CD4-positive, alpha-beta memory T cell (primary cell): ENCODE measurements at regions of chr1 and their contacts with region 1.

Region 1: GRCh38 chr1:173714759-173715537 is at the start of gene KLHL20:
- DNase-seq: peak; percentile 89 to 93 (median 91)
- H3K4me3 ChIP-seq: peak within 1 kb of the TSS; percentile 47 to 73
- H3K4me3 Mint-ChIP-seq: peak within 1 kb of the TSS; percentile 95 to 100 (median 97)
- H3K27ac ChIP-seq: peak within 1 kb of the TSS; percentile 78
- H3K27ac Mint-ChIP-seq: peak within 1 kb of the TSS; percentile 92 to 98 (median 97)
- H3K4me1 ChIP-seq: peaks cover 34% of the 10 kb centered on the region
- H3K4me1 Mint-ChIP-seq: peaks cover 18 to 33% (median 25%) of the 10 kb centered on the region in 4 donors
- H3K27me3 ChIP-seq: peaks cover 5% of the 10 kb centered on the region
- H3K27me3 Mint-ChIP-seq: peaks cover 14 to 15% of the 10 kb centered on the region in 2 donors
- total RNA-seq, gene KLHL20: 41.0 to 43.9 TPM

Region 2: GRCh38 chr1:171781176-171781875 is 1933.6 kb before region 1 on chr1 and contains the start of gene METTL13:
- CTCF ChIA-PET with region 1: no interaction called
- POLR2A ChIA-PET with region 1: no interaction called
- intact Hi-C with region 1: loop called (anchors 10 kb)
- DNase-seq: peak; percentile 98 to 100 (median 99)
- H3K4me3 ChIP-seq: peak within 1 kb of the TSS; percentile 92 to 99
- H3K4me3 Mint-ChIP-seq: peak within 1 kb of the TSS; percentile 94 to 100 (median 96)
- H3K27ac ChIP-seq: peak within 1 kb of the TSS; percentile 71
- H3K27ac Mint-ChIP-seq: peak within 1 kb of the TSS; percentile 86 to 99 (median 98)
- H3K4me1 ChIP-seq: peaks cover 53% of the 10 kb centered on the region
- H3K4me1 Mint-ChIP-seq: peaks cover 37 to 67% (median 48%) of the 10 kb centered on the region in 4 donors
- H3K27me3 ChIP-seq: no peaks in the 10 kb centered on the region
- H3K27me3 Mint-ChIP-seq: no peaks in the 10 kb centered on the region
- total RNA-seq, gene METTL13: 33.3 to 36.7 TPM

Region 3: DNA sequence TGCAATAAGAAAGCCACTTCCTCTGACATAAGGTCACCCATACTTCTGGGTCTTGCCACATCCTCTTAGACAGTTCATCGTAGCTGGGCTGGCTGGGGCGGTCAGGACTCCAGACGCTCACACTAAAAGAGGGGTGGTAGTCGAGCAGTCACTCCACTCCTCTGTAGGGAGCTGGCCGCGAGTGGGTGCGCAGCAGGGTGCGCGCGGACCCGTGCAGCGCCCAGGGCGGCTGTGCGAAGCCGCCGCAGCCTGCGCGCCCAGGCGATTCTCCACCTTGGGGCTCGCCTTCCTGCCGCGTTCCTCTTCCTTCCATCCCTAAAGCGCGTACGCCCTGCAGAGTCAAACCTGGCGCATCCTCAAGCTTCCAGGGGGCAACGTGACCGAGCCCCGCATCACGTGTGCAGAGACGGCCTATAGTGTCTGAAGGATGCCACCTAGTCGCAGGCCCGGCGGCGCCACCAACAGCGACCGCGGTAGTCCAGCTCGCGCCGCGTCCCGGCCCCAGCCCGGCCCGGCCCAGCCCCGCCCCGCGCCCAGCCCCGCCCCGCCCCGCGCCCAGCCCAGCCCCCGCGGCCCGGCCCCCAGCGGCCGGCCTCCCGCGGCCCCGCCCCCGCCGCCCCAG is 238.2 kb before region 1 on chr1:
- CTCF ChIA-PET with region 1: interaction called, 8 read pairs
- POLR2A ChIA-PET with region 1: interaction called, 37 read pairs
- intact Hi-C with region 1: loop called (anchors 1 kb)
- DNase-seq: peak; percentile 77 to 90 (median 84)
- H3K4me3 ChIP-seq: peak overlapping the region; percentile 93
- H3K4me3 Mint-ChIP-seq: peak overlapping the region; percentile 89 to 94 (median 91)
- H3K27ac ChIP-seq: peak overlapping the region; percentile 89
- H3K27ac Mint-ChIP-seq: peak overlapping the region; percentile 89 to 95 (median 91)
- H3K4me1 ChIP-seq: peaks cover 61% of the 10 kb centered on the region
- H3K4me1 Mint-ChIP-seq: peaks cover 38 to 68% (median 55%) of the 10 kb centered on the region in 4 donors
- H3K27me3 ChIP-seq: no peaks in the 10 kb centered on the region
- H3K27me3 Mint-ChIP-seq: no peaks in the 10 kb centered on the region

Region 4: DNA sequence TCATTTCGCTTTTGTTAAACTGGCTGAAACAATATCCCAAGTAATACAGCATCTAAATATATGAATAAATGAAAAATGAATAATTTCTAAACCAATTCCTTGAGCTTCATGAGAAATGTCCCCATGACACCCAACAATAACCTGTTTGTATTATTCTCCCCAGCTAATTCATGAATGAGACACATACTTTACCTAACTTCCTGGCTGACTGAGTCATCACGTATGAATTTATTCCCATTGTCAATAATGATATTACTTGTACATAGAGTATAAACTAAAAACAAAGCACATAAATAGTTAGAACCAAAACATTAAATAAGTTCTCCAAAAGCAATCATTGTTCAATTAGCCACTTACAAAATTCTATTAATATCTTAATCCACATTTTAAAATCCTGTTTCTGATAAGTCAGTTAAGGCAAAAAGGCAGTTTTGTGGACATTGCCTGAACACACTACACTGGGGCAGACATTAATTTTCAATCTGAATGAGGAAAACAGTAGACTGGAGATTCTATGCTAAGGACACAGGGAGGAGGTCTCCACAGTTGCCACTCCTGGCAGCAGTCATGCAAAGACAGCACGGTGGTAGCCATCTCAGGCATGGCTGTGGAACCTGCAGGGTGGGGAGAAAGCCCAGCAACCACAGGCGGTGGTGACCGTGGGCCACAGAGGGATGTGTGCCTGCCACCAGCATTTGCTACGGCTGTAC is 160.3 kb before region 1 on chr1:
- CTCF ChIA-PET with region 1: no interaction called
- POLR2A ChIA-PET with region 1: no interaction called
- intact Hi-C with region 1: loop called (anchors 10 kb)
- DNase-seq: no peak
- H3K4me3 ChIP-seq: no peak overlapping the region
- H3K4me3 Mint-ChIP-seq: no peak overlapping the region
- H3K27ac ChIP-seq: no peak overlapping the region
- H3K27ac Mint-ChIP-seq: peak overlapping the region in 1 of 7 donors; percentile 15
- H3K4me1 ChIP-seq: peaks cover 32% of the 10 kb centered on the region
- H3K4me1 Mint-ChIP-seq: peaks cover 24 to 52% (median 37%) of the 10 kb centered on the region in 4 donors
- H3K27me3 ChIP-seq: no peaks in the 10 kb centered on the region
- H3K27me3 Mint-ChIP-seq: no peaks in the 10 kb centered on the region

Region 5: DNA sequence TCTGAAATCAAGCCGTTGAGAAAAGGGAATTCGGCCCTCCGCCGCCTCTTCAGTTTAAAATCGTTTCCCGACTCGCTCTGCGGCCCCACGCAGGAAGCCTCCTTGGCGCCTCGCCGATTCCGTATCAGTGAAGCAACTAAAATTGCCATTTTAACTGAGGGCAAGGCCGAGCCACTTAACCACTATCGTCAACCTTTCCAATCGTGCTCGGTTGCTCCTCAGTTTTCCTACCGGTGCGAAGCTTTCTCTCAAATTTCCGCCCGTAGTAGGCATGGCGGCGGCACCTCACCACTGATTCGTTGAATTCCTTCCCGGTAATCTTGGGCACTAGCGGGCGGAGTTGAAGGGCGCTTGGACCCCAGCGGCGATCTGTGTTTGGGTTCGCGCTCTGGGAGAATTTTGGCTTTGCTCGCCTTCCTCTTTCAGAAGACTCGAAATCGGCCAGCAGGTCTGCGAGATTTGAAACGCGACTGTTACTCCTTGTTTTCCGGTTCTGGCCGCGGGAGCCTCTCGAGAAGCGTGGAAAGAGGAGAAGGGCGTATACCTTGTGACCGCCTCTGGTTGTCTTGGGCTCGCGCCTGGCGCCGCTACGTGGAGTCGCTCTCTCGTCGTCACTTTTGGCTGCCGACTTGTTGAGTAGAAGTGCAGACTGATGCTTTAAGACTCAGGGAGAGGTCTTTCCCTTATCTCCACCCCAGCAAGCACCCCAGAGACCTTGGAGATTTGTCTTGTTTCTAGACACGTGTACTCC is 109.6 kb after region 1 on chr1 and contains the starts of genes CENPL and DARS2:
- CTCF ChIA-PET with region 1: interaction called, 3 read pairs
- POLR2A ChIA-PET with region 1: interaction called, 27 read pairs
- intact Hi-C with region 1: loop called (anchors 2 kb)
- DNase-seq: peak; percentile 92 to 96 (median 93)
- H3K4me3 ChIP-seq: peak within 1 kb of the TSS; percentile 93 to 95
- H3K4me3 Mint-ChIP-seq: peak within 1 kb of the TSS; percentile 93 to 99 (median 97)
- H3K27ac ChIP-seq: peak within 1 kb of the TSS; percentile 79
- H3K27ac Mint-ChIP-seq: peak within 1 kb of the TSS; percentile 97 to 99 (median 97)
- H3K4me1 ChIP-seq: peaks cover 18% of the 10 kb centered on the region
- H3K4me1 Mint-ChIP-seq: peaks cover 27 to 46% (median 33%) of the 10 kb centered on the region in 4 donors
- H3K27me3 ChIP-seq: no peaks in the 10 kb centered on the region
- H3K27me3 Mint-ChIP-seq: no peaks in the 10 kb centered on the region
- total RNA-seq, gene CENPL: 9.0 to 10.2 TPM
- total RNA-seq, gene DARS2: 13.4 to 13.5 TPM

Region 6: GRCh38 chr1:174013864-174014418 is 299.0 kb after region 1 on chr1:
- CTCF ChIA-PET with region 1: no interaction called
- POLR2A ChIA-PET with region 1: no interaction called
- intact Hi-C with region 1: no loop called
- DNase-seq: no peak
- H3K4me3 ChIP-seq: no peak overlapping the region
- H3K4me3 Mint-ChIP-seq: peak overlapping the region in 2 of 8 donors; percentile 53 to 58
- H3K27ac ChIP-seq: no peak overlapping the region
- H3K27ac Mint-ChIP-seq: peak overlapping the region in 1 of 7 donors; percentile 18
- H3K4me1 ChIP-seq: peaks cover 34% of the 10 kb centered on the region
- H3K4me1 Mint-ChIP-seq: peaks cover 41 to 70% (median 58%) of the 10 kb centered on the region in 4 donors
- H3K27me3 ChIP-seq: no peaks in the 10 kb centered on the region
- H3K27me3 Mint-ChIP-seq: no peaks in the 10 kb centered on the region

Region 7: GRCh38 chr1:174159252-174160108 is 444.5 kb after region 1 on chr1 and contains the start of gene RABGAP1L:
- CTCF ChIA-PET with region 1: no interaction called
- POLR2A ChIA-PET with region 1: no interaction called
- intact Hi-C with region 1: loop called (anchors 10 kb)
- DNase-seq: peak; percentile 91 to 96 (median 95)
- H3K4me3 ChIP-seq: peak within 1 kb of the TSS; percentile 88 to 95
- H3K4me3 Mint-ChIP-seq: peak within 1 kb of the TSS; percentile 94 to 99 (median 97)
- H3K27ac ChIP-seq: peak within 1 kb of the TSS; percentile 92
- H3K27ac Mint-ChIP-seq: peak within 1 kb of the TSS; percentile 92 to 99 (median 98)
- H3K4me1 ChIP-seq: peaks cover 56% of the 10 kb centered on the region
- H3K4me1 Mint-ChIP-seq: peaks cover 40 to 67% (median 52%) of the 10 kb centered on the region in 4 donors
- H3K27me3 ChIP-seq: no peaks in the 10 kb centered on the region
- H3K27me3 Mint-ChIP-seq: no peaks in the 10 kb centered on the region
- total RNA-seq, gene RABGAP1L: 113 to 114 TPM

Region 8: DNA sequence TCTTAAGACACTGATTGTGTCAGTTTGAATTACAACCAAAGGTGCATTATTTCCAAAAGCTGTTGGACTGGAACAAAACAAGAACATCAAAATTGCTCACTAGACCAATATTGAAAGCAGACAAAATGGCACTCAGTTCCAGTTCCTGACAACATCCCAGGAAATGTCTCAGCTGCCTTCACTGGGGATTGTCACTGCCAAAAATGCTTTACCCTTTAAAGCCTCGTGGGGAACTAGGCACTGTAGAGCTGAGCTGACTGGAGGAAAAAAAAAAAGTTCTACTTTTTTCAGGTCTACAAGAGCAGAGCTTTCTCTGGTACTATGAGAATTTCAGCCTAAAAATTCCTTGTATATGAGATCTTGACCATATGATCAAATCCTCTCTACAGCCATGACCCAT is 754.7 kb after region 1 on chr1:
- CTCF ChIA-PET with region 1: no interaction called
- POLR2A ChIA-PET with region 1: no interaction called
- intact Hi-C with region 1: no loop called
- DNase-seq: no peak
- H3K4me3 ChIP-seq: no peak overlapping the region
- H3K4me3 Mint-ChIP-seq: no peak overlapping the region
- H3K27ac ChIP-seq: no peak overlapping the region
- H3K27ac Mint-ChIP-seq: no peak overlapping the region
- H3K4me1 ChIP-seq: no peaks in the 10 kb centered on the region
- H3K4me1 Mint-ChIP-seq: peaks cover 0 to 8% (median 1%) of the 10 kb centered on the region in 4 donors
- H3K27me3 ChIP-seq: no peaks in the 10 kb centered on the region
- H3K27me3 Mint-ChIP-seq: no peaks in the 10 kb centered on the region